Esophagus squamous epithelium (tissue), 5 donors: ENCODE measurements at regions of chr17 and their contacts with region 1.

Region 1: DNA sequence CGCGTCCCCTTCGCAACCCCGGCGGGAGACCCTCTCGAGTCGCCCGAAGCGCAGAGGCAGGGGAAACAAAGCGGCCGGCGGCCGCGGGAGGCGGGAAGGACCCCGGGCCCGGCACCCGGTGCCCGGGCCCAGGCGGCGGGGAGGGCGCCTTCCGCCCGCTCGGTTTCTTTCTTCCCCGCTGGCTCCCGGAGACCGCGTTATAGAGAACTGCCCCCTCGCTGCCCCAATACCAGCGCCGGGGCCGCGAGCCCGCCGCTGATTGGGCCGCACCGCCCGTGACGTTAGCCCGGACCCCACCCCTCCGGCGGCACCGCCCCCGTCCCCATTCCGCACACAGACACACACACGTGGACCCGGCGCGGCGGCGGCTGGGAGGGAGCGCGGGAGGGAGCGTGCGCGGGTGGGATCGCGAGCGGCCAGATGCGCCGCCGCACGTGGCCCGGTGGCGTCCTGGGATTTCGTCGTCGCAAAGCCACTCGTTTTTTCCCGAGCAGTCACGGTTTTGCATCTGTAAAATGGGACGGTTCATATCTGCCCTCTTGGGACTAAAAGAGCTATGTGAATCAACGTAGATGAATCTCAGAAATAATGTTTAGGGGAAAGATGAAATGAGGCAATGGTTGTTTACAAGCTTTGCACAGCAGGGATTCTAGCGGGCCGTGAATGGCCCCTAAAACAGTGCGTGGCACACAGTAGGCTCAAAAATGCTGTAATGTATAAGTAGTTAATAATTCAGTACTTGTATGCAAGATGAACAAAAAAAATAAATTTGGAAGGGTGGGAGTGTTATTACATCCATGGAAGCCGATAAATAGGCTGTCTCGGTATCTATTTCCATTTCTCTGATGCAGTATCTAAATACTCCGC is at the start of gene EPOP:
- DNase-seq: peak; percentile 35
- H3K4me3 ChIP-seq: peak within 1 kb of the TSS; percentile 53 to 76 (median 64)
- H3K27ac ChIP-seq: peak within 1 kb of the TSS in 3 of 4 donors; percentile 43 to 65 (median 58)
- H3K4me1 ChIP-seq: peaks cover 15 to 59% (median 26%) of the 10 kb centered on the region in 3 donors
- H3K27me3 ChIP-seq: peaks cover 0 to 63% (median 13%) of the 10 kb centered on the region in 4 donors
- CTCF ChIP-seq: peak in 1 of 6 experiments; percentile 9
- POLR2A ChIP-seq: peak in 2 of 4 donors; percentile 57 to 73
- total RNA-seq, gene EPOP: 1.8 to 3.2 (median 2.8) TPM

Region 2: GRCh38 chr17:38704645-38705522 is 29.9 kb after region 1 on chr17 and contains the start of gene MLLT6:
- intact Hi-C with region 1: loop called (anchors 2 kb)
- DNase-seq: no peak
- H3K4me3 ChIP-seq: peak within 1 kb of the TSS; percentile 76 to 94 (median 90)
- H3K27ac ChIP-seq: peak within 1 kb of the TSS; percentile 96 to 98 (median 96)
- H3K4me1 ChIP-seq: peaks cover 10 to 79% (median 28%) of the 10 kb centered on the region in 3 donors
- H3K27me3 ChIP-seq: no peaks in the 10 kb centered on the region
- CTCF ChIP-seq: no peak
- POLR2A ChIP-seq: peak in 1 of 4 donors; percentile 52
- total RNA-seq, gene MLLT6: 30.6 to 79.7 (median 35.1) TPM

Region 3: GRCh38 chr17:38735161-38735997 is 60.4 kb after region 1 on chr17:
- intact Hi-C with region 1: loop called (anchors 2 kb)
- DNase-seq: no peak
- H3K4me3 ChIP-seq: no peak overlapping the region
- H3K27ac ChIP-seq: peak overlapping the region in 2 of 4 donors; percentile 14 to 17
- H3K4me1 ChIP-seq: peaks cover 14 to 54% (median 15%) of the 10 kb centered on the region in 3 donors
- H3K27me3 ChIP-seq: no peaks in the 10 kb centered on the region
- CTCF ChIP-seq: peak; percentile 89 to 96 (median 92)
- POLR2A ChIP-seq: no peak

Region 4: GRCh38 chr17:38799378-38800236 is 124.6 kb after region 1 on chr17 and contains the start of gene PIP4K2B:
- intact Hi-C with region 1: no loop called
- DNase-seq: peak; percentile 84
- H3K4me3 ChIP-seq: peak within 1 kb of the TSS; percentile 60 to 92 (median 79)
- H3K27ac ChIP-seq: peak within 1 kb of the TSS; percentile 98 to 100 (median 100)
- H3K4me1 ChIP-seq: peaks cover 16 to 44% (median 22%) of the 10 kb centered on the region in 3 donors
- H3K27me3 ChIP-seq: no peaks in the 10 kb centered on the region
- CTCF ChIP-seq: no peak
- POLR2A ChIP-seq: peak in 1 of 4 donors; percentile 48
- total RNA-seq, gene PIP4K2B: 14.4 to 32.6 (median 24.1) TPM